Activated CD8-positive, alpha-beta memory T cell treated with anti-CD3 and anti-CD28 coated beads, Interleukin-2, amount 10 ng/mL, durations not matched to agents 7 days and 5 days (primary cell): ENCODE measurements at regions of chr10 and their contacts with region 1.

Region 1: DNA sequence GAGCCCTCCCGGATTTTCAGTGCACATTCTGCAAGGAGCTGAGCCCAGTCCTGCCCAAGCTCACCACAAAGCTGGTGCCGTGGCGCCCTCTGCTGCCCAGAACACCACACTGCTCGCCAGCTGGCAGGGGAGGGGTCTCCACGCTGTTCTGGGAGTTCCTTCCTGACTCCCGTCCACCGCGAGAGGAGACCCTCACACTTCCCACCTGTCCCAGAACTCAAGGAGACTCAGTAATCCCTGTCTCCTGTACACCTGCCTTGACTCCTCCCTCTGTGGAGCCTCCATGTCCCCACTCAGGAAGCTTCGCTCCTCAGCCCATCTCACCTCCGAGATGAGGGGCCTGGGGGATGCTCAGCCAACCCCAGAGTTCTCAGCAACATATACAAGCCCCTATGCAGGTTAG is 11.3 kb downstream of the C10orf105 start:
- DNase-seq: peak; percentile 68
- ATAC-seq: peak; percentile 40
- H3K4me3 Mint-ChIP-seq: no peak overlapping the region
- H3K27ac Mint-ChIP-seq: no peak overlapping the region
- H3K4me1 Mint-ChIP-seq: peaks cover 25% of the 10 kb centered on the region
- H3K27me3 Mint-ChIP-seq: no peaks in the 10 kb centered on the region

Region 2: GRCh38 chr10:71378336-71379117 is 329.8 kb before region 1 on chr10:
- CTCF ChIA-PET with region 1: interaction called, 19 read pairs
- DNase-seq: no peak
- ATAC-seq: no peak
- H3K4me3 Mint-ChIP-seq: peak overlapping the region; percentile 3
- H3K27ac Mint-ChIP-seq: no peak overlapping the region
- H3K4me1 Mint-ChIP-seq: peaks cover 15% of the 10 kb centered on the region
- H3K27me3 Mint-ChIP-seq: peaks cover 3% of the 10 kb centered on the region

Region 3: DNA sequence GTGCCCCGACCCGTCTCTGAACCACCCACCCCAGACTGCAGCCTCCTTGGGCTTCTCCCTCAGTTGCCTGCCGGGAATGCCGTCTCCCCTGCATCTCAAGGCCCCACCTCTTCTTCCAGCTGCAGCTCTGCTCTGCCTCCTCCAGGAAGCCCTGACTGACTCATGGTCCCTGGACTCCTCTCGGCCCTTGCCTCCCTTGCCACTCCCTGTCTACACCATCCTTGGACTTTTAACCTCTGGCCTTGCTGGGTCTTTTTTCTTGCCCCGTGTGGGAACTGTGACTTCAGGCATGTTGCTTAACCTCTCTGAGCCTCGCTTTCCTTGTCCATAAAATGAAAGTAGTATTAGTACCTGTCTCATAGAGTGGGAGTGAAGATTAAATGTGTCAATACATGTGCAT is 45.0 kb before region 1 on chr10:
- CTCF ChIA-PET with region 1: interaction called, 22 read pairs
- DNase-seq: no peak
- ATAC-seq: no peak
- H3K4me3 Mint-ChIP-seq: no peak overlapping the region
- H3K27ac Mint-ChIP-seq: no peak overlapping the region
- H3K4me1 Mint-ChIP-seq: peaks cover 8% of the 10 kb centered on the region
- H3K27me3 Mint-ChIP-seq: peaks cover 2% of the 10 kb centered on the region

Region 4: DNA sequence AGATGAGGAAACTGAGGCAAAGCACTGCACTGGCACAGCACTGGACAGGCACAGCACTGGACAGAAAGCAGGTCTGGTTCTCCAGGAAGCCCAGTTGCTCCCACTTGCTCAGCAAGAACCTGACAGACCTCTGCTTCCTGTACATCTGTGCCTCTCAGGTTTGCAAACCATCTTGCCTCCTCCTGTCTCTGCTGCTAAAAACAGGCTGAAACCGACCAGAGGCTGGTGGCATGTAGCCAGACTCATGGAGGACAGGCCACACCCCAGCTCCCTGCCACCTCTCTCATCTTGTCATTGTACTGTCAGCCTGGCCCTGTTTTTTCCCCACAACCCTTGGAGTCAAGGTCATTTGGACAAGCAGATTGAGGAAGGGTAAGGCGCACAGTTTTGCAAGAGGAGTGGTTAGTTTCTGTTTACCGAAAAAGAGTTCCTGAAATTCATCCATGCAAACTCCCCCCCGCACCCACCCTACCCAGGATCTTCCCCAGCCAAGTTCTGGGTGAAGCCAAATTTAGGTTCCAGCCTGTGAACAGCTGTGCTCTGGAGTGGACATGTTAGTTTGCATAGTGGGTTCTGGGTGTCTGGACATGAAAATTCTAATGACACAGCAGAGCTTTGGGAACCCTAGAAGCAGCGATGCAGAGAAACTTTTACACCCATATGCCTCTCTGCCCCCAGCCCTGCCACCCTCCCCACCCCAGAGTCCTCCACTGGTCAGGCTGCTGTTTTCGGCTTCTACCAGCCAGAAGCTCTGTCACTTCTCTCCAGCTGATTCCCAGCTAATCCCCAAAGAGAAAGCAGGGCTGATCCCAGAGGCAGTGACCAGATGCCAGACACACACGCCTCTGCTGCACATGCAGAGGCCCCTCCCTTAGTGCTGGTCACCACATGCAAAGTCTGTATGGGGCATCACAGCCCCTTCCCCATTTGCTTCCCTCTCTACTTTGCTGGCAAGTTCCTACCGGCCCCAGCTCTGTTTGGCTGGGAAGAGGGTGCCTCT is 19.7 kb after region 1 on chr10:
- CTCF ChIA-PET with region 1: interaction called, 42 read pairs
- DNase-seq: peak; percentile 86
- ATAC-seq: peak; percentile 57
- H3K4me3 Mint-ChIP-seq: peak overlapping the region; percentile 11
- H3K27ac Mint-ChIP-seq: peak overlapping the region; percentile 96
- H3K4me1 Mint-ChIP-seq: peaks cover 85% of the 10 kb centered on the region
- H3K27me3 Mint-ChIP-seq: no peaks in the 10 kb centered on the region

Region 5: GRCh38 chr10:71771821-71772617 is 63.7 kb after region 1 on chr10:
- CTCF ChIA-PET with region 1: interaction called, 61 read pairs
- DNase-seq: no peak
- ATAC-seq: no peak
- H3K4me3 Mint-ChIP-seq: peak overlapping the region; percentile 84
- H3K27ac Mint-ChIP-seq: peak overlapping the region; percentile 90
- H3K4me1 Mint-ChIP-seq: peaks cover 83% of the 10 kb centered on the region
- H3K27me3 Mint-ChIP-seq: no peaks in the 10 kb centered on the region